ENCODE measurements at regions of chr19 and their contacts with region 1.

Region 1: GRCh38 chr19:12681074-12681951 is at the start of gene DHPS:
- DNase-seq: peak; percentile 97
- H3K4me3 ChIP-seq: peak within 1 kb of the TSS; percentile 81 to 89 (median 83)
- H3K27ac ChIP-seq: peak within 1 kb of the TSS; percentile 95
- H3K4me1 ChIP-seq: no peaks in the 10 kb centered on the region
- H3K27me3 ChIP-seq: no peaks in the 10 kb centered on the region
- CTCF ChIP-seq: no peak
- total RNA-seq, gene DHPS: 46.5 to 73.8 TPM

Region 2: GRCh38 chr19:12580163-12580694 is 101.1 kb before region 1 on chr19:
- CTCF ChIA-PET with region 1: no interaction called
- dilution Hi-C with region 1: no loop called
- in situ Hi-C with region 1: no loop called
- intact Hi-C with region 1: no loop called
- DNase-seq: no peak
- H3K4me3 ChIP-seq: no peak overlapping the region
- H3K27ac ChIP-seq: no peak overlapping the region
- H3K4me1 ChIP-seq: no peaks in the 10 kb centered on the region
- H3K27me3 ChIP-seq: no peaks in the 10 kb centered on the region
- CTCF ChIP-seq: no peak

Region 3: DNA sequence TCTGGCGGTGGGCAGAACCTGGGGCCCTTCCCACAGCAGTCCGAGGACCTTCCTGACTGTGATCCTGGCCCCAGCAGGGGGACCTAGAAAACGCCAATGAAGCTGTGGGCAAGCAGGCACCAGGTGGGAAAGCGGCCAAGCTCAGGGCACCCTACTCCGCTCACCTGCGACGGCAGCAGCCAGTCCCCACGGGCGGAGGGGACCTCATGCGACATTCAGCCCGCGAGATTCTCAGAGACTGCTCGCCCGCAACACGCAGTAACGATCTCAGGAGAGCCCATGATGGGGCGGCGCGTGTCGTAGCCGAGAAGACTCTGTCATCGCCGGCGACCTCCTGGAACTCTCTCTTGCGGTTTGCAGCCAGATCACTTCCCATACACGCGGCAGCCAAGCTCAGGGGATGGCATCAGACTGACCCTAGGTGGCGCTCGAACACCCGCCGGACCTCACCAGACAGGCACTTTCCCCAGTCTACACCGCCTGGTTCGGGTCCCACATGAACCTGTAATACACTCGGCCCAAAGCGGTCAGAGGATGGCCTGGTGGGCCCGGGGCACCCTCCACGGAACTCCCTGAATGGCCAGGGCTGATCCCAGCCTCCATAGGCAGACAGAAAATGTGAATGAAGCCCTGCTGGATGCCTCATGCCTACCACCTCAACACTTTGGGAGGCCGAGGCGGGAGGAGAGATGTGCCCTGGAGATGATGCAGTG is 41.3 kb before region 1 on chr19:
- CTCF ChIA-PET with region 1: no interaction called
- dilution Hi-C with region 1: loop called (anchors 10 kb)
- in situ Hi-C with region 1: no loop called
- intact Hi-C with region 1: no loop called
- DNase-seq: peak; percentile 50
- H3K4me3 ChIP-seq: peak overlapping the region in 1 of 3 experiments; percentile 10
- H3K27ac ChIP-seq: no peak overlapping the region
- H3K4me1 ChIP-seq: no peaks in the 10 kb centered on the region
- H3K27me3 ChIP-seq: no peaks in the 10 kb centered on the region
- CTCF ChIP-seq: peak; percentile 47 to 68

Region 4: DNA sequence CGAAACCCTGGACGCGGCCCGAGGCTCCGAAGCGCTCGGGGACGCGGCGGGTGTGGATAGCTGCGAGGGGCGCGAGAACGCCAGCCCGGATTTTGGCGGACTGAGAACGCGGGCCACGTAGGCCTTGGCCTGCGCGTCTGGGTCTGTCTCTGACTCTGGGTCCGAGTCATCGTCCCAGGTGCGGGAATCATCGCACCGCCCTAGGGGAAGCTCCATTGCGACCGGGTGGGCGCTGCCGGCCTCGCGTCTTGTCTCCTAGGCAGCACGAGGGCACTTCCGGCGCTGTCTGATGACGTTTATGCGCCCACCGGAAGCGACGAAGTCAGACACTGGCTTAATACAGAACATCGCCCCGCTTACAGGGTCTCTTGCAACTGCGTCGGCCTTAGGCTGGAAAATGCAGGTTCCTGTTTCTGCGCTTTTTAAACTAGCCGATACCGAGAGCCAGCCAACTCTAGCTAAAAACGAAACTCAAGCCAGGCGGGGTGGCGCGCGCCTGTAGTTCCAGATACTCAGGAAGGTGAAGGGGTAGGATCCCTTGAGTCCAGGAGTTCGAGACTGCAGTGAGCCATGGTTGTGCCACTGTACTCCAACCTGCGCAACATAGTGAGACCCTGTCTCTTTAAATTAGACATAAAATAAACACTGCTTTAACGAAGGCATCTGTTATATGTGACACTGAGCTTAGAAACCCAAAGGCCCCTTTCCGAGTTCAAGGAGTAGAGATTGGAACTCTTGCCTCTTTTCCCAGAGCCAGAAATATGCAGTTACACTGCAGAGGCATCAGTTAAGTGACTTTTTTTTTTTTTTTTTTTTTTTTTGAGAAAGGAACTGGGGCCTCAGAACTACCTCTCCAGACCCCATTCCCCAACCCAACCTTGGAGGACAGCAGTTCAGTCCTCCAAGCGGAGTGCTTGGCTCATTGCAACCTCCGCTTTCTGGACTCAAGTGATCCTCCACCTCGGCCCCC is 15.3 kb after region 1 on chr19 and contains the start of gene FBXW9:
- CTCF ChIA-PET with region 1: no interaction called
- dilution Hi-C with region 1: no loop called
- in situ Hi-C with region 1: no loop called
- intact Hi-C with region 1: no loop called
- DNase-seq: peak; percentile 88
- H3K4me3 ChIP-seq: peak within 1 kb of the TSS; percentile 64 to 94 (median 68)
- H3K27ac ChIP-seq: peak within 1 kb of the TSS; percentile 58
- H3K4me1 ChIP-seq: peaks cover 9% of the 10 kb centered on the region
- H3K27me3 ChIP-seq: no peaks in the 10 kb centered on the region
- CTCF ChIP-seq: no peak
- total RNA-seq, gene FBXW9: 13.7 to 14.8 TPM